ENCODE measurements at regions of chr15 and their contacts with region 1.

Region 1: DNA sequence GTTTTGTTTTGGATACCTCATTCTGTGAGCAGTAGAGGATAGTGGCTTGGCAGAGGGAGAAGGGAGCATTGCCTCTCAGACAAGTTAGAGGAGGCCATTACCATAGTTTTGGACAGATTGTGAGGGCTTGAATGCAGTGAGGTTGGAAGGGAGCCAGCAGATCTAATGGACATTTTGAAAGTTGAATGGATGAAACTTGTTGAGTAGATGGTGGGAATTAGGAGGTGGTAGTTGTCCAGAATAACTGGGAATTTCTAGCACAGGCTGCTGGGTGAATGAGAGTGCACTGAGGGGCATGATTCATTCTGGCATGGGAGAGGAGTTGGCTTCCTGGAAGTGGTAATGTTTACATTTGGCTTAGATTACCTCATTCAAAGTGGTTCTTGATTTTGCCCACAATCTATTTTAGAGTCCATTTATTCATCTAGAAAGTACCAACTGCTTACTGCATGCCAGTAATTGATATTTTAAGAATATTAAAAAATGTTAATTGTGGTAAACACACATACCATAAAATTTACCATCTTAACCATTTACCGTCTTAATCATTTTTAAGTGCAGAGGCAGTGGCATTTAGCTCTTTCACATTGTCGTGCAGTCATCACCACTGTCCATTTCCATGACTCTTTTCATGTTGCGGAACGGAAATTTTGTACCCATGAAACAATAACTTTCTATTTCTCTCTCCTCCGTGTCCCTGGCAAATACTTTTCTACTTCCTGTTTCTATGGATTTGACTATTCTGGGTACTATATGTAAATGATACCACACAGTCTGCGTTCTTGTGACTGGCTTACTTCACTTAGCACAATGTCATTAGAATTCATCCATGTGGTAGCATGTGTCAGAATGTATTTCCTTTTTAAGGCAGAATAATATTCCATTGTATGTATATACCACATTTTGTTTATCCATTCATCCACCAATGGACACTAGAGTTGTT is 27.7 kb downstream of the AKAP13 start:
- DNase-seq: peak; percentile 61
- ATAC-seq: peak; percentile 64
- H3K4me3 Mint-ChIP-seq: peak overlapping the region; percentile 32
- H3K27ac Mint-ChIP-seq: peak overlapping the region; percentile 93
- H3K4me1 Mint-ChIP-seq: peaks cover 86% of the 10 kb centered on the region
- H3K27me3 Mint-ChIP-seq: no peaks in the 10 kb centered on the region

Region 2: DNA sequence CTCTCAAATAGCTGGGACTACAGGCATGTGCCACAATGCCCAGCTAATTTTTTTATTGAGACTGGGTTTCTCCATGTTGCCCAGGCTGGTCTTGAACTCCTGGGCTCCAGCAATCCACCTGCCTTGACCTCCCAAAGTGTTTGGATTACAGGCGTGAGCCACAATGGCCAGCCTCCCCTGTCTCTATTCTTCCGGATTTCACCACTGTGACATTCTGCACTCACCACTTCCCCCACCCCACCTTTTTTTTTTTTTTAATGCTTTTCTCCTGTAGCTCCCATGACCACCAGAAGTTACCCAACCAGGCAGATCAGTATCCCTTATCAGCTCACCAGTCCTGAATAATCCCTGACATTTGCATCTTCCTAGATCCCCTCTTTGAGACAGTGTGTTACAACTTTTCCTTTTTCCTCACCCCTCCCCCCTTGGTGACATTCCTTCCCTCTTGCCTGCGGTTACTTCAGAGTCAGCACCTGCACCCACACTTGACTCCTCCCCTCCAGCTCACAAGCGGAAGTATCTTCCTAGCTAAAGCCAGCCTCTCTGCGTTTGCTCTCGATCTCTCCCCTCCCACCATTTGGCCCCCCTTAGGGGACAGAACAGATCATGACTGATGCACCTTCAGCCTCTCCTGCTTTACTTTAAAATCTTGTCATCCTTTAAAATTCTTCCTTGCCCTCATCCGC is 673.1 kb before region 1 on chr15:
- CTCF ChIA-PET with region 1: no interaction called
- POLR2A ChIA-PET with region 1: no interaction called
- intact Hi-C with region 1: loop called in 1 of 2 experiments (anchors 5 kb)
- DNase-seq: peak; percentile 87
- ATAC-seq: peak; percentile 72
- H3K4me3 Mint-ChIP-seq: peak overlapping the region; percentile 59
- H3K27ac Mint-ChIP-seq: peak overlapping the region; percentile 97
- H3K4me1 Mint-ChIP-seq: peaks cover 63% of the 10 kb centered on the region
- H3K27me3 Mint-ChIP-seq: no peaks in the 10 kb centered on the region

Region 3: DNA sequence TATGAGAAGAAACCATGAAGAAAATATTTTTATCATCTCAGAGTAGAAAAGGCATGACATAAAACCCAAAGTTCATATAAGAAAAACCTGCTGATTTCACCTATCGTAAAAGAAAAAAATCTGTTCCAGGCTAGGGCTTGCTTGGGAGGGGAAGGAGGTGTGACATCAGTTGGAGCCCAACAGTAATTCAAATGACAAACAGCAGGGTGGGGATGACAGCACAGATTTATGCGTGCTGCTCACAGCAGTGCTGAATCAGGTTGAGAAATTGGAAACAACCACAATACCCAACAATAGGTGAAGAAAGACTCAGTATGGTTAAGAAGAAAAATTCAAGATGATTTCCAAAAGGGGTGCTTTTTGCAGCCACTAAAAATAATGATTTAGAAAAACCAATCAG is 254.0 kb before region 1 on chr15:
- CTCF ChIA-PET with region 1: no interaction called
- POLR2A ChIA-PET with region 1: no interaction called
- intact Hi-C with region 1: no loop called
- DNase-seq: peak; percentile 12
- ATAC-seq: peak; percentile 47
- H3K4me3 Mint-ChIP-seq: no peak overlapping the region
- H3K27ac Mint-ChIP-seq: no peak overlapping the region
- H3K4me1 Mint-ChIP-seq: peaks cover 18% of the 10 kb centered on the region
- H3K27me3 Mint-ChIP-seq: no peaks in the 10 kb centered on the region

Region 4: GRCh38 chr15:85330901-85331588 is 77.0 kb before region 1 on chr15:
- CTCF ChIA-PET with region 1: interaction called, 22 read pairs
- POLR2A ChIA-PET with region 1: no interaction called
- intact Hi-C with region 1: loop called (anchors 1 to 2 kb)
- DNase-seq: peak; percentile 81
- ATAC-seq: peak; percentile 77
- H3K4me3 Mint-ChIP-seq: peak overlapping the region; percentile 80
- H3K27ac Mint-ChIP-seq: peak overlapping the region; percentile 88
- H3K4me1 Mint-ChIP-seq: peaks cover 46% of the 10 kb centered on the region
- H3K27me3 Mint-ChIP-seq: no peaks in the 10 kb centered on the region

Region 5: DNA sequence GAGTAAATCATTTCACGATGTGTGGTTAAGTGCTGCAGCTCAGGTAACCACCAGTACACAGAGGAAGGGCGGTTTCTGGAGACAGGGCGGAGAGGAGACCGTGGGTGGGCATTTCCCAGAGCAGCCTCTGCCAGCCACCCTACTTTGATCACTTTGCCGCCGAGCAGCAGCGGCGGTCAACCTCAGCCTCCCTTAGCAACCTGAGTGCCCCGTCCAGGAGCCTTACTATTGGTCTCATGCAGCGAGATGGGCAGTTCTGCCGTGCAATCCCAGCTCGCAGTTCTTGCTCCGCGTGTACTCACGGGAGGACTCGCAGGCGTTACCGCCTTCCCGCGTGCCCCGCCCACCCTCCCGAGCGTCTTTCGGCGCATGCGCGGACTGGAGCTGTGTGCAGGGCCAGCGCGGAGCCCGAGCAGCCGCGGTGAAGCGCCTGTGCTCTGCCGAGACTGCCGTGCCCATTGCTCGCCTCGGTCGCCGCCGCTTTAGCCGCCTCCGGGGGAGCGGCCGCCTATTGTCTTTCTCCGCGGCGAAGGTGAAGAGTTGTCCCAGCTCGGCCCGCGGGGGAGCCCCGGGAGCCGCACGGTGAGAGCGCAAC is 27.8 kb before region 1 on chr15 and contains the start of gene AKAP13:
- CTCF ChIA-PET with region 1: interaction called, 15 read pairs
- POLR2A ChIA-PET with region 1: interaction called, 9 read pairs
- intact Hi-C with region 1: loop called (anchors 1 kb)
- DNase-seq: peak; percentile 97
- ATAC-seq: peak; percentile 90
- H3K4me3 Mint-ChIP-seq: peak within 1 kb of the TSS; percentile 72
- H3K27ac Mint-ChIP-seq: peak within 1 kb of the TSS; percentile 92
- H3K4me1 Mint-ChIP-seq: peaks cover 50% of the 10 kb centered on the region
- H3K27me3 Mint-ChIP-seq: no peaks in the 10 kb centered on the region
- total RNA-seq, gene AKAP13: 85.1 to 104 TPM

Region 6: DNA sequence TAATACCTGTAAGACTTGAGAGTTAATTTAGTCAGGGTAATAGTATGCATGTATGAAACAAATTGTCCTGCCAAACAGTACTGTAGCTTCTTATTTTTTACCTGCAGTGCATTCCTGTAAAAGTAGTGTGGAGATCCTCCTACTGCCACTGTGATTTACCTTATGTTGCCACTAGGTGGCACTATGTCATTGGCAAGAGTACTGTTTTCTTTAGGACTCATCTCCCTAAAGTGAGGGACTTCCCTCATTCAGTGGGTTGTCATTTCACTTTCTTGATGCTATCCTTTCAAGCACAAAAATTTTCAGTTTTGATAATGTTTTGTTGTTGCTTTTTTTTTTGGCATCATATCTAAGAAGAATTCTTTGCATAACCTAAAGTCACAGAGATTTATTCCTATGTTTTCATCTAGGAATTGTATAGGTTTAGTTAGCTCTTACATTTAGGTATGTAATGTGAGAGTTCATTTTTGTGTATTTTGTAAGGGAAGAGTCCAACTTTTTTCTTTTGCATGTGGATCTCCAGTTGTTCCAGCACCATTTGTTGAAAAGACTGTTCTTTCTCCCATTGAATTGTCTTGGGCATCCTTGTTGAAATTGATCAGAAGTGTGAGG is 78.0 kb after region 1 on chr15:
- CTCF ChIA-PET with region 1: no interaction called
- POLR2A ChIA-PET with region 1: no interaction called
- intact Hi-C with region 1: loop called in 1 of 2 experiments (anchors 5 kb)
- DNase-seq: peak; percentile 74
- ATAC-seq: peak; percentile 92
- H3K4me3 Mint-ChIP-seq: no peak overlapping the region
- H3K27ac Mint-ChIP-seq: peak overlapping the region; percentile 23
- H3K4me1 Mint-ChIP-seq: peaks cover 73% of the 10 kb centered on the region
- H3K27me3 Mint-ChIP-seq: no peaks in the 10 kb centered on the region

Region 7: DNA sequence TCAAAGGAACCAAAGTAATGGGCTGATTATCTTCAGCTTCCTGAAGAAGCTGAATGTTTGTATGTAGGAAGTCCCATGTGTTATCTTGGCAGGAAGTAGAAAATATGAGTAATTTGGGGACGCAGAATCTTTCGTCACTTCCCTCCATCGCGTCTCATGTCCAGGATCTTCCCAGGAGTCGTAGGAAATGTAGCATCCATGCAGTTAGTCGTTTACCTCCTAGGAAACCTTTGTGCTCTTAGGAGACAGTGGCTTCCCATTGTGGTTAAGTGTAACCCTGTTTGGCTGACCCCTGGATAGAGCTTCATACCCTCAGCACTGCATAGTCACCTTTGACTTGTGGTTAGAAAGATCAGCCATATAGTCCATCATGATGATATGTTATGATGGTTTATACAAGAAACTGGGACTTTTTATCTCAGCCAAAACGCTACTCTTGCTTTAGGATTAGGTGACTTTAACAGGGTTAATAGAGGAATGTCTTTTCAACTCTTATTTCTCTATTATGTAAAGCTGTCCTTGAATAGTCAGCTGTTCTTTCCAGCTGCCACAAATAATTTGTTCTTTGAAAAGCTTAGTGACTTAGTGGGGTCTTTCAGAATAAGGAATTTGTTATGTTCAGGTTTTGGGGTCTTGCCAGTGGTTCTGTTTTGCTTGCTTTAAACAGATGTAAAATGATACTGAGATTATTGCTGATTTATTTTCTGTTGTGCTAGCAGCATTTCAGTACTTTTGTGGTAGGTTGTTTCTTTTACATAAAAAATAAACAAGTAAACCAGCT is 294.4 kb after region 1 on chr15:
- CTCF ChIA-PET with region 1: interaction called, 4 read pairs
- POLR2A ChIA-PET with region 1: interaction called, 3 read pairs
- intact Hi-C with region 1: loop called (anchors 2 to 5 kb)
- DNase-seq: peak; percentile 46
- ATAC-seq: peak; percentile 53
- H3K4me3 Mint-ChIP-seq: peak overlapping the region; percentile 70
- H3K27ac Mint-ChIP-seq: peak overlapping the region; percentile 94
- H3K4me1 Mint-ChIP-seq: peaks cover 73% of the 10 kb centered on the region
- H3K27me3 Mint-ChIP-seq: no peaks in the 10 kb centered on the region

Measured in activated CD4-positive, alpha-beta T cell treated with anti-CD3 and anti-CD28 coated beads for 36 hours (primary cell).